Psoas muscle (tissue), 8 donors: ENCODE measurements at regions of chr14 and their contacts with region 1.

Region 1: GRCh38 chr14:68199554-68200151 is 380.1 kb downstream of the RAD51B start:
- DNase-seq: no peak
- ATAC-seq: peak in 1 of 4 donors; percentile 17
- H3K4me3 ChIP-seq: no peak overlapping the region
- H3K27ac ChIP-seq: peak overlapping the region; percentile 62
- H3K4me1 ChIP-seq: peaks cover 33% of the 10 kb centered on the region
- H3K27me3 ChIP-seq: no peaks in the 10 kb centered on the region
- CTCF ChIP-seq: no peak

Region 2: GRCh38 chr14:68089146-68089731 is 110.4 kb before region 1 on chr14:
- intact Hi-C with region 1: no loop called
- DNase-seq: no peak
- ATAC-seq: peak; percentile 40 to 71 (median 69)
- H3K4me3 ChIP-seq: peak overlapping the region; percentile 50
- H3K27ac ChIP-seq: peak overlapping the region; percentile 24
- H3K4me1 ChIP-seq: peaks cover 12% of the 10 kb centered on the region
- H3K27me3 ChIP-seq: no peaks in the 10 kb centered on the region
- CTCF ChIP-seq: no peak

Region 3: DNA sequence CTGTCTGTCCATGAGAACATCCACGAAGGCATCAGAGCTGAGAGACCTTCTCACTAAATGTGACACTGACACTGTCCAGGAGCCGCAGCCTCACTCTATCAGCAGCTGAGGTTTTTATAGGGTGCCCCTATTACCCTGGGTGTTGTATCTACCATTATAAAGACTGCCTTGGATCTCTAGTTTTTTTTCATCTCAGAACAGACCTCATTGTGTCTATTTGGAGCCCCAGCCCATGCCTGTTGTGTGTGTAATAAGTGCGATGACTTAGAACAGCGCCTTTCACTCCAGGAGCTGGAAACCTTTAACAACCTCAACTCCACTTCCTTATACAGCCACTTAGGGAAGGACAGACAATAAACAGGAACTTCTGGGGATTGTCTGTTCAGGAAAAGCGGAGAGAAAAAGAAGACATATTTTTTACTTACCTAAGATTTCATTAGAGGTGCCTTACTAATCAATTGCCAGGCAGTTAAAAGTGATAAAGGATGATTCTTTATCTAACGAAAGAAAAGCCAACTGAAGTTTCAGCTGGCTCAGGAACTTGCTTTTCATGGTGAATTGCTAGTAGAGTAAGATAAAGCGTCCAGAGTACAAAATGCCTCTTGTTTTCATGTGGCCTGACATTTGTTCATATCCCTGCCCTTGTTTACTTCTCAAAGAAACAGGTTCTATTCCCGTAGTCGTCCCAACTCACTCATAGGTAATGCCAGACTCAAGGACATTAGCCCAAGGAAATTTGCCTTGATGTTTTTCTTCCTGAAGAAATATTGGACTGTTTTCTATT is 40.5 kb after region 1 on chr14:
- intact Hi-C with region 1: loop called (anchors 5 kb)
- DNase-seq: no peak
- ATAC-seq: no peak
- H3K4me3 ChIP-seq: no peak overlapping the region
- H3K27ac ChIP-seq: peak overlapping the region; percentile 89
- H3K4me1 ChIP-seq: peaks cover 68% of the 10 kb centered on the region
- H3K27me3 ChIP-seq: no peaks in the 10 kb centered on the region
- CTCF ChIP-seq: no peak